ENCODE measurements at regions of chr11 and their contacts with region 1.

Region 1: GRCh38 chr11:109697140-109697843 is 275.3 kb downstream of the C11orf87 start:
- DNase-seq: peak in 1 of 2 donors; percentile 8
- ATAC-seq: peak; percentile 52 to 61 (median 57)
- H3K4me3 ChIP-seq: no peak overlapping the region
- H3K4me3 Mint-ChIP-seq: no peak overlapping the region
- H3K27ac ChIP-seq: no peak overlapping the region
- H3K27ac Mint-ChIP-seq: no peak overlapping the region
- H3K4me1 ChIP-seq: no peaks in the 10 kb centered on the region
- H3K4me1 Mint-ChIP-seq: no peaks in the 10 kb centered on the region
- H3K27me3 ChIP-seq: no peaks in the 10 kb centered on the region
- H3K27me3 Mint-ChIP-seq: no peaks in the 10 kb centered on the region
- CTCF ChIP-seq: peak; percentile 36

Region 2: GRCh38 chr11:108697872-108698473 is 999.3 kb before region 1 on chr11:
- intact Hi-C with region 1: loop called (anchors 2 kb)
- DNase-seq: peak in 1 of 2 donors; percentile 56
- ATAC-seq: peak; percentile 54 to 77 (median 68)
- H3K4me3 ChIP-seq: no peak overlapping the region
- H3K4me3 Mint-ChIP-seq: no peak overlapping the region
- H3K27ac ChIP-seq: no peak overlapping the region
- H3K27ac Mint-ChIP-seq: no peak overlapping the region
- H3K4me1 ChIP-seq: no peaks in the 10 kb centered on the region
- H3K4me1 Mint-ChIP-seq: peaks cover 0 to 5% of the 10 kb centered on the region in 2 donors
- H3K27me3 ChIP-seq: no peaks in the 10 kb centered on the region
- H3K27me3 Mint-ChIP-seq: no peaks in the 10 kb centered on the region
- CTCF ChIP-seq: peak; percentile 73